ENCODE measurements at regions of chr12 and their contacts with region 1.

Region 1: GRCh38 chr12:64633656-64634337 is 23.5 kb downstream of the RASSF3 start:
- DNase-seq: peak; percentile 59 to 85
- H3K4me3 ChIP-seq: no peak overlapping the region
- H3K27ac ChIP-seq: peak overlapping the region; percentile 80 to 88
- H3K4me1 ChIP-seq: peaks cover 0 to 100% (median 44%) of the 10 kb centered on the region in 4 donors
- H3K27me3 ChIP-seq: no peaks in the 10 kb centered on the region
- CTCF ChIP-seq: no peak

Region 2: DNA sequence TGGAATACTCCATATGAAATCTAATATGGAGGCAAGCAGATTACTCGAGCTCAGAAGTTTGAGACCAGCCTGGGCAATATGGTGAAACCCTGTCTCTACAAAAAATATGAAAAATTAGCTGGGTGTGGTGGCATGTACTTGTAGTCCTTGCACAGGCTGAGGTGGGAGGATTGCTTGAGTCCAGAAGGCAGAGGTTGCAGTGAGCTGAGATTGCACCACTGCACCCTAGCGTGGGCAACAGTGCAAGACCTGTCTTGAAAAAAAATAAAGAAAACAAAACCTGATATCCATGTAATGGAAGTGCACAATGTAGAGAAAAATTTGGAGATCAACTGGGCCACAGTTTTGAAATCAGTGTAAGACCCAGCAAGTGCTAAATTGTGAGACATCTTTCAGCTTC is 260.6 kb before region 1 on chr12:
- intact Hi-C with region 1: no loop called
- DNase-seq: no peak
- H3K4me3 ChIP-seq: no peak overlapping the region
- H3K27ac ChIP-seq: no peak overlapping the region
- H3K4me1 ChIP-seq: no peaks in the 10 kb centered on the region
- H3K27me3 ChIP-seq: no peaks in the 10 kb centered on the region
- CTCF ChIP-seq: no peak

Region 3: DNA sequence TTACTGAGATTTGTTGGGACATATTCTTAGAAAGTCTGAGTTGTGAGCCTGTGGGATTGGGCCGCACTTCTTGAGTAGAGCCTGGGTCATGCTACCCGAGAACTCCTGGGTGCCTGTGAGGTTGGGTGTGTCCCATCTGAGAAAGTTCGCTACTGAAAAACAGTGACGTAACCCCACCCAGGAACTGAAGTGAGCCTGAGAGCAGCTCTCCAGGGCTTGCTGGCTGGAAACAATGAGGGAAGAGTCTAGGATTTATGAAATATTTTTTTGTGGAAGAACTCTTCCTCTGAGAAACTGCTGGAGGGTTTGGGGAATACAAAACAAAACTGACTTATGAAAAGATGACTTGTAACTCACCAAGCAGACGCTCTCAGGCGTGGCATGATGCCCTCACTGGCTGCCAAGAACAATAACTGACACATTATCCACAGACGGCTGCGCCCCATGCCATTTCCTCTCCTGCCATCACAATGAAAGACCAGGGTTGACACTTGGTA is 45.7 kb after region 1 on chr12:
- intact Hi-C with region 1: loop called (anchors 5 kb)
- DNase-seq: peak; percentile 87 to 93
- H3K4me3 ChIP-seq: peak overlapping the region; percentile 27 to 32
- H3K27ac ChIP-seq: peak overlapping the region; percentile 84 to 88
- H3K4me1 ChIP-seq: peaks cover 0 to 99% (median 65%) of the 10 kb centered on the region in 4 donors
- H3K27me3 ChIP-seq: no peaks in the 10 kb centered on the region
- CTCF ChIP-seq: no peak